ENCODE measurements at regions of chr1 and their contacts with region 1.

Region 1: DNA sequence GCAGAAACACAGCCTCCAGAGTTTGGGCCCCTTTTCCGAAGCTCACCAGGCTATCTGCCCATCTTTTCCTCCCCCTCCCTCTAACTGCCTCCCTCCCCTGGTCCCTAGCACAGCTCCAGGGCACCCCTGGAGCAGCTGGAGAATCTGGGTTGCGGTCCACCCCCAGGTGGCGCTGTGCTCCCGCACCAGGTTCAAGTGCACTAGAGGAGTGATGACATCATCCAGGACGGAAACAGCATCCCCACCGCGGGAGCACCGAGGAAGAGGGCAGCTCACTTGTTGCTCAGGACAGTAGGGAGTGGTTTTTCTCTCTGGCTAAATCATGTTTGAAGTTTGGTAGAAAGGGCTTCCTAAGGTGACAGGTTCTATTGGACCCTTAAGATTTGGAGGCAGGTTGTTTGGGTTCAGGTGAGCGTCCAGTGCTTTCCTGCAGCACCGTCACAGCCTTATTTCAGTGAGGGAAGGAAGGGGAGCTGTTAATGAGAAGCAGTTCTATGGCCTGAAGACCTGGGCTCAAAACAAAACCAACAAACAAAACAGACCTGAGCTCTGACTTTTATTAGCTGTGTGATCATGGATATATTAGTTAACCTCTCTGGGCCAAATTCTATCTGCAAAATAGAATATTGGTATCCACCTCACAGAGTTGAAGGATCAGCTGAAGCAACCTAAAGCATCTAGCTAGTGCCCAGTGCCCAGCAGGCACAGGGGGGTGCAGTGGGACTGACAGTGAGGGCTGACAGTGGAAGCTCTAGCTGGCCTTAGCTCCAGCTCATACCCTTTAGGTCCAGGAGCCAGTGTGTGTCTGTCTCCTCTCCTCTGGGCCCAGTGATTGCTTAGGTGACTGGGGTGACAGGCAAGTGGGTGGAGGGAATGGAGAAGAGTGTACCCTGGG is 7.5 kb downstream of the SHISA4 start:
- DNase-seq: peak; percentile 76 to 94 (median 86)
- ATAC-seq: peak; percentile 94 to 99 (median 96)
- H3K4me3 ChIP-seq: no peak overlapping the region
- H3K27ac ChIP-seq: no peak overlapping the region
- H3K4me1 ChIP-seq: no peaks in the 10 kb centered on the region
- H3K27me3 ChIP-seq: no peaks in the 10 kb centered on the region
- CTCF ChIP-seq: peak; percentile 71 to 93 (median 83)

Region 2: DNA sequence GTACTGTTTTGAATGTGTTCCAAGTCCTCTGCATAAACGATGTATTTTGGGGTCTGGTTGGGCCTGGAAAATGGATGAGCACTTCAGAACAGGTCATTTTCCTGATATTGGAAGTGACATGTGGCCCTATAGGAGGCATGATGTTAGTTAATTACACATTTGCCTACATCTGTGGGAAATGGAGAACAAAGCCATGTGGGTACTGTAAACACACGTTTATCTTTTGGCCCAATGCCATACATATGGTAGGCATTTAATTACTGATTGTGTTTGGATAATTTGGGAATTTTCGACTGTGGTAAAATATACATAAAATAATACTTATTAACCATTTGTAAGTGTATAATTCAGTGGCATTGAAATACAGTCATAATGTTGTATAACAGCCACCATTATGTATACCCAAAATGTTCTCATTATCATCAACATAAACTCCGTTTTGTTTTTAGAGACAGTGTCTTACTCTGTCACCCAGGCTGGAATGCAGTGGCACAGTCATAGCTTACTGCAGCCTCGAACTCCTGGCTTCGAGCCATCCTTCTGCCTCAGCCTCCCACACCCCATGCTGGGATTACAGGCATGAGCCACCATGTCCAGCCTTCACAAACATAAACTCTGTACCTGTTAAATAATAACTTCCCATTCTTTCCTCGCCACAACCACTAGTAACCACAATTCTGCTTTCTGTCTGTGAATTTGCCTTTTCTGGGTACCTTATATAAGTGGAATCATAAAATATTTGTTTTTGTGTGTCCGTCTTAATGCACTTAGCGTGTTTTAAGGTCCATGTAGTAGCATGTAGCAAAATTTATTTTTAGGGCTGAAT is 74.4 kb after region 1 on chr1:
- intact Hi-C with region 1: loop called in 1 of 3 experiments (anchors 5 kb)
- DNase-seq: no peak
- ATAC-seq: peak in 1 of 4 donors; percentile 13
- H3K4me3 ChIP-seq: no peak overlapping the region
- H3K27ac ChIP-seq: no peak overlapping the region
- H3K4me1 ChIP-seq: peaks cover 0 to 4% (median 0%) of the 10 kb centered on the region in 3 donors
- H3K27me3 ChIP-seq: no peaks in the 10 kb centered on the region
- CTCF ChIP-seq: no peak

Region 3: DNA sequence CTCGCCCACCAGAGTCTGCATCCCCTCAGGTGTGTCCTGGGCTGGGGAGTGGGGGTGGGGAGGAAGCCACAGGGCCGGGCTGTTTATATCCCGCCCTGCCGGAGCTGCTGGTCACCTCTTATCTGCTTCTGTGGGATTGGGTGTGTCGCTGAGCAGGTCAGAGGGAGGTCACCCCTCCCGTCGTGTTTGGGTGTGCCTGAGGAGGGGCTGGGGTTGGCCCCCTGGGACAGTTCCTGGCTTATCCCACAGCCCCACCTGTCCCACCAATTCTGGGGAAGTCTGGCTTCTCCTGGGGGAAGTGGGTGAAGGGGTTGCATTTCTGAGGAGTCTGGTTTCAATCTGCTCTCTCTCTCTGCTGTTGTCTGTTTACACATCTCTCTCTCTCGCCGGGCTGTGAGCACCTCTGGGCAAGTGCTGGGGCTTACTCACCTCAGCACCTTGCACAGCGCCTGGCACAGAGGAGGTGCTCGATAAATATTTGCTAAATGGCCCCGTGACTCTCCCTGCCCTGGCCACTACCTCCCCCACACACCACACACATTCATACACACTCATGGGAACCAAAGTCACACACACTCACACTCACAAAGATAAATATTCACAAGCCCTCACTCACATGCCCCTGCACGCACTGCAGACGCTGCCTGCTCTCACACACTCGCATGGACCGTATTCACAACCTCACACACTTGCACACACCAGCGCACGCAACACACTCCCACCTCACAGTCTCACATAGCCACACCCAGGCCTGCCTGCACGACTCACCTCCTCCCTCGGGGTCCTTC is 122.5 kb after region 1 on chr1:
- intact Hi-C with region 1: no loop called
- DNase-seq: peak; percentile 77 to 94 (median 92)
- ATAC-seq: peak; percentile 79 to 87 (median 81)
- H3K4me3 ChIP-seq: peak overlapping the region in 2 of 4 donors; percentile 10 to 83
- H3K27ac ChIP-seq: peak overlapping the region; percentile 68 to 97 (median 82)
- H3K4me1 ChIP-seq: peaks cover 35 to 46% (median 37%) of the 10 kb centered on the region in 3 donors
- H3K27me3 ChIP-seq: no peaks in the 10 kb centered on the region
- CTCF ChIP-seq: no peak

Region 4: GRCh38 chr1:202129453-202130296 is 233.5 kb after region 1 on chr1:
- intact Hi-C with region 1: loop called in 1 of 3 experiments (anchors 5 kb)
- DNase-seq: no peak
- ATAC-seq: no peak
- H3K4me3 ChIP-seq: no peak overlapping the region
- H3K27ac ChIP-seq: no peak overlapping the region
- H3K4me1 ChIP-seq: no peaks in the 10 kb centered on the region
- H3K27me3 ChIP-seq: no peaks in the 10 kb centered on the region
- CTCF ChIP-seq: no peak

Measured in pancreas (tissue), 10 donors.